HepG2 (cell line): ENCODE measurements at regions of chr20 and their contacts with region 1.

Region 1: DNA sequence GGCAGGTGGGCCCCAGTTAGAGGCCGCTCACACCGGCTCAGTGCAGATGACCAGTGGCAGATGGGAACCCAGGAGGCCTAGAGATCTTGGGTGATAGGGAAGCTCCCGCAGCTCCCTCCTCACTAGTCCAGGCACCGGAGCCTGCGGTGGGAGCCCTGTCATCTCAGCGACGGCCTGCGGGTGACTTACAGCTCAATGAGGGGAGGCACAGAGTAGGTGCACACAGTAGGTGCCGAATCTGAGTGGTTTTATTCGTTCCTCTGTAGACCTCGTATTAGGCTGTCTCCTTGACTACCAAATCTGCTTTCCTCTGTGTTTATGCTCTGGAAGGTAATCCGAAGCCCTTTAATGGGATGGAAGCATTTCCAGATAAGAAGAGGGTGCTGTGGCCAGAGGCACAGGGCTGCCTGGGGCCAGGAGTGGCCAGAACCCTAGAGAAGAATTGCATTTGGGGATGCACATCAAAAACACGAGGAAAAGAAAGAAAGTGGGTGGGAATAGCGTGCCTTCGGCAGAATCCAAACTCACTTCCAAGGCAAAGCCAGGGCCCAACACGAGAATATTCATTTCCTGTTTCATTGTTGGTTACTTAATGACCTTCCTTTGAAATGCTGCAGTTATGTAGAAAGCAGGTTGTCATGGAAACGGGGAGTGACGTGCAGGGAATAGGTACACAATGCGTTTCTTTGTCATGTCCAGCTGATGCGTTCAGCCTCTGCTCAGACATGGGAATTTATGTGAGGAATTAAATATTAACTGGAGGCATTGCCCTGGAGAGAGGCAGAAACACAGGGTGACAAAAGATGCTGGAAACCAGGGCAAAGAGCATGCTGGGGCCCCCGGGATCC is 24.7 kb downstream of the MYT1 start:
- DNase-seq: peak; percentile 100
- ATAC-seq: peak; percentile 91
- H3K4me3 ChIP-seq: peak overlapping the region in 1 of 3 experiments; percentile 64; a peak in 2 of 6 replicates
- H3K27ac ChIP-seq: peak overlapping the region; percentile 88
- H3K4me1 ChIP-seq: peaks cover 45% of the 10 kb centered on the region
- H3K27me3 ChIP-seq: peaks cover 3 to 6% of the 10 kb centered on the region in 2 experiments; a peak in 1 of 5 replicates
- CTCF ChIP-seq: no peak; the same call in 1 of the 2 replicates
- EP300 ChIP-seq: peak; percentile 65 to 79; a peak in 3 of 4 replicates
- POLR2A ChIP-seq: no peak
- RAD21 ChIP-seq: no peak

Region 2: DNA sequence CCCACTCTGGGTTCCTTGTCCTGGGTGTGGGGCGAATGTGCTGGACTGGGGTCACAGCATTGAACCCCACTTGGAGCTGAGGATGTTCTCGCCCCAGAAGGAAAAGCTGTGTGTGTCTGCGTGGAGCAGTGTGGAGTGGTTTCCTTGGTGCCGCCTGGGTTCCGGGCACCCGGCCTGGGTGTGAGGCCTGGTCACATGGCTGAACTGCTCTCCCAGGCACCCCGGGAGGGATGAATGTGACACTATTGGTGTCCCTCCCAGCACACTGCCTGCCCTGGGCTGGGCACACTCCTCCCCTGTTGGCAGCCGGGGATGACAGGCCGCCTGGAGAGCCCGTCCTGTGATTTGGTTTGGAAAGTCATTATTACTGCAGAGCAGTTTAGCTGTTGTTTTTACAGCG is 12.4 kb before region 1 on chr20:
- CTCF ChIA-PET with region 1: no interaction called
- POLR2A ChIA-PET with region 1: no interaction called
- in situ Hi-C with region 1: no loop called
- intact Hi-C with region 1: no loop called
- DNase-seq: no peak
- ATAC-seq: no peak
- H3K4me3 ChIP-seq: no peak overlapping the region
- H3K27ac ChIP-seq: no peak overlapping the region
- H3K4me1 ChIP-seq: peaks cover 9% of the 10 kb centered on the region
- H3K27me3 ChIP-seq: peaks cover 0 to 27% of the 10 kb centered on the region in 2 experiments; a peak in 2 of 5 replicates
- CTCF ChIP-seq: no peak
- EP300 ChIP-seq: no peak
- POLR2A ChIP-seq: no peak
- RAD21 ChIP-seq: no peak

Region 3: DNA sequence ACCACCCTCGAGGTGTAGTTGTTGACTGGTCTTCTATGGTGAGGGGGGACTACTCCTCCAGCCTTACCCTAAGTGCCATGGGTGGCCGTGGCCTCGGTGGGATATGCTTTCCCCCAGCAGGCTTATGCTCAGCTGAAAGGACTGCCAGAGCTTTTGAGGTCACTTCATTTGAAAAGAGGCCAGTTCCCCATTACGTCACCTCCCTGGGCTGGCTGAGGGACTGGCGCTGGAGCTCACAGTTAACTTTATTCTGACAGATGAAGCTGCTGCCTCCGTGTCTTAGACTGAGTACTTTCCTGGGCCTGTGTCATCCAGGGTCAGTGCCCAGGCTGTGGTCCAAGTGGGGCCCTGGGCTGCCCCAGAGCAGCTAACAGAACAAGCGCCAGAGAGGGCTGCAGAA is 23.8 kb after region 1 on chr20:
- CTCF ChIA-PET with region 1: no interaction called
- POLR2A ChIA-PET with region 1: interaction called, 10 read pairs
- in situ Hi-C with region 1: no loop called
- intact Hi-C with region 1: no loop called
- DNase-seq: no peak
- ATAC-seq: peak; percentile 7; the same call in 2 of the 3 replicates
- H3K4me3 ChIP-seq: peak overlapping the region in 1 of 3 experiments; percentile 51; a peak in 1 of 6 replicates
- H3K27ac ChIP-seq: no peak overlapping the region
- H3K4me1 ChIP-seq: peaks cover 57% of the 10 kb centered on the region
- H3K27me3 ChIP-seq: peaks cover 34 to 78% of the 10 kb centered on the region in 2 experiments
- CTCF ChIP-seq: no peak
- EP300 ChIP-seq: no peak
- POLR2A ChIP-seq: no peak
- RAD21 ChIP-seq: no peak

Region 4: DNA sequence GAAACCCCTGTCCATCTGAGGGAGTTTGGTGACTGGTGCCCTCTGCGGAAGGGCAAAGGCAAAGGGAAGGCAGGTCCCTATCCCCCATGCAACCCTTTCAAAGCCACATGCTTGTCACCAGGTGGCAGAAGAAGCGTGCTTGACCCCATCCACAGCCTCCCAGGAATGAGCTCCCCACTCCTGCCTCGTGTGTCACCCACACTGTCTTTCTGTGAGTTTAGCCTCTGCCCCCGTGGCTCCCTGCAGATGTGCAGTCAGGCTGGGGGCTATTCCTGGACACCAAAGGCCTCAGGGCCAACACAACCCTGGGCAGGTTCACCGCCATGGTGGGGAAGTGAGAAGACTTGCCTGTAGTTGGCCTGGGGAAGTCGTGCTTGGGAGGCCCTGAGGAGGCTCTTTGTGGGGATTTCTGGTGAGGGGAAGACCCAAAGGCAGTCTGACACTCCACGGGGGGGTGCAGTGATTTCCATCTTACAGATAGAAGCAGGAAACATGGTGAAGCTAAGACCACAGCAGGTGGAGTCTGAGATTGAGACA is 50.0 kb after region 1 on chr20:
- CTCF ChIA-PET with region 1: no interaction called
- POLR2A ChIA-PET with region 1: interaction called, 11 read pairs
- in situ Hi-C with region 1: no loop called
- intact Hi-C with region 1: no loop called
- DNase-seq: peak; percentile 49
- ATAC-seq: peak; percentile 4; the same call in 2 of the 3 replicates
- H3K4me3 ChIP-seq: peak overlapping the region in 1 of 3 experiments; percentile 19; a peak in 2 of 6 replicates
- H3K27ac ChIP-seq: peak overlapping the region; percentile 69
- H3K4me1 ChIP-seq: peaks cover 90% of the 10 kb centered on the region
- H3K27me3 ChIP-seq: no peaks in the 10 kb centered on the region
- CTCF ChIP-seq: peak; percentile 71
- EP300 ChIP-seq: no peak
- POLR2A ChIP-seq: no peak
- RAD21 ChIP-seq: no peak